ENCODE measurements at regions of chr10 and their contacts with region 1.

Region 1: GRCh38 chr10:29482591-29483431 is 152.0 kb downstream of the SVIL start:
- DNase-seq: no peak
- H3K4me3 ChIP-seq: no peak overlapping the region; the same call in 1 of the 2 replicates
- CTCF ChIP-seq: no peak

Region 2: GRCh38 chr10:29470355-29470705 is 12.5 kb before region 1 on chr10:
- CTCF ChIA-PET with region 1: interaction called, 13 read pairs
- POLR2A ChIA-PET with region 1: no interaction called
- DNase-seq: no peak
- H3K4me3 ChIP-seq: no peak overlapping the region
- CTCF ChIP-seq: peak; percentile 40

Measured in AG04449 (cell line).